Activated T-helper 2 cell treated with anti-CD3 and anti-CD28 coated beads, Interferon-gamma antibody, Interleukin-2, Interleukin-4, amounts not matched to agents 10 μg/mL and 5 μg/mL and 100 μg/mL, durations not matched to agents 14 hours and 24 hours and 36 hours (primary cell): ENCODE measurements at regions of chrX and their contacts with region 1.

Region 1: DNA sequence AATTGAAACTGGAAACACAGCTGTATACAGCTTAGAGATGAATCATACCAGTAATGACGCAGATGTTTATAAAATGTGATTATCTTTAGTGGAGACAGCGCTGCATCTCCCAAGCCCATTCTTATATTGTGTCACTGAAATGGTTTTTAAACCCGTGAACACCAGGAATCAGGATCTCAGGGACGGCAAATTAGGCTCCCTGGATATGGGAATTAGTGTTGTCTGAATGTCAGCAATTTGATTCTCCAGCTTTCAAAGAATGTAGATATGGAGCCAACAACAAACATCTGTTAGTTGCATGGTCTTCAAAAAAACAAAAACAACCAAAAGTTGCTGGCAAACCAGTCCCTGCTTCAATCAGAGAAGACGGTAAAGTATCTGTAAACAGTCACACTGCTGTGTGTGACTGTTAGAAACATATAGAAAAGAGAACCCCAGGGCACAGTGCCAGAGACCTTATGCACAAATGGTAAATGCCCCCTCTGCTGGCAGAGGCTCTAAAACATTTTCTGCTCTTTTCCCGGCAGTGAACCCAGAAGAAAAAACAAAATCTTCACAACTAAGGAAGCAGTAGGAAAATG is 351.9 kb upstream of the FTHL17 start:
- DNase-seq: no peak
- H3K4me3 Mint-ChIP-seq: no peak overlapping the region
- H3K27ac Mint-ChIP-seq: no peak overlapping the region
- H3K4me1 Mint-ChIP-seq: no peaks in the 10 kb centered on the region
- H3K27me3 Mint-ChIP-seq: no peaks in the 10 kb centered on the region

Region 2: DNA sequence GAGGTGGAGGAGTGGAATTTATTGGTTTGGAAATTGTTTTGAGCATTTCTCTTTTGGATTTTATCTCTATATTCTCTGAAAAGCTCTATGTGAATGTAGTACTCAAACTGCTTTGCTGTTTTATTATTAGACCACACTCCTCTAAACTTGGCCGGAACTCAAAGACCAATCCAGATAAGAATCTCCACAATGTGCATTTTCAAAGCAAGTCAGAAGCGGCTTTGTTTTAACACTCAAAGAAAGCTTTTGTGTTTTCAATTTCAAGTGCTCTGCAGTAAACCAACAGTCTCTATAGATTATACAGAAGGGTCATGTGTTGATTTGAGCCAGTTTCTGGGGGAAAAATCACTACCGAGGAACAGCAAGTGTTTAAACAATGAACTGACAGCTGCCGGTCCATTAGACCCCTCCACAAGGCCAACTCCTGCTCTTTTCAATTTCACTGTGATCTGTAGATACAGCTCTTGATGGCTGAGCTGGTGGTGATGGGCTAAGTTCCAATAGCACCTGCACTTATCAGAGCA is 431.3 kb before region 1 on chrX:
- intact Hi-C with region 1: no loop called
- DNase-seq: no peak
- H3K4me3 Mint-ChIP-seq: no peak overlapping the region
- H3K27ac Mint-ChIP-seq: no peak overlapping the region
- H3K4me1 Mint-ChIP-seq: peaks cover 21% of the 10 kb centered on the region
- H3K27me3 Mint-ChIP-seq: peaks cover 9% of the 10 kb centered on the region

Region 3: DNA sequence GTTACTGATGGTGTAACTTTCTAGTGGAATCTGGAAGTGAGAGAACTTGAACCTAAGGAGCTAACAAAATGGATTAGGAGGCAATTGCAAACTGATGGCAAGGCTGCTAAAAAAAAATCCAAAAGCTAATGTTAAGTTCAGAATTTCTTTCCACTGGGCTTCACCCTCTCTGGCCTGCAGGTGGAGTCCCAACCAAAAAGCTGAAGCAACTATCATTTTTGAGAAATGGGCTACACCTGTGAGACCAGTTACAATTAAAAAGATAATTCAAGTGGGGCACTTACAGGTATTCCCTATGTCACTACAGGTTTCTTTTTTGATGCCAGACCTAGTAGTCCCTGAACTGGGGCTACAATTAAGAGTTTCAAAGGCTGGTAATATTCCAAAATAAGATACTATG is 209.8 kb before region 1 on chrX:
- intact Hi-C with region 1: loop called (anchors 10 kb)
- DNase-seq: no peak
- H3K4me3 Mint-ChIP-seq: no peak overlapping the region
- H3K27ac Mint-ChIP-seq: no peak overlapping the region
- H3K4me1 Mint-ChIP-seq: no peaks in the 10 kb centered on the region
- H3K27me3 Mint-ChIP-seq: no peaks in the 10 kb centered on the region

Region 4: GRCh38 chrX:31449965-31450364 is 26.3 kb after region 1 on chrX:
- intact Hi-C with region 1: no loop called
- DNase-seq: no peak
- H3K4me3 Mint-ChIP-seq: no peak overlapping the region
- H3K27ac Mint-ChIP-seq: no peak overlapping the region
- H3K4me1 Mint-ChIP-seq: no peaks in the 10 kb centered on the region
- H3K27me3 Mint-ChIP-seq: no peaks in the 10 kb centered on the region